MCF 10A (cell line): ENCODE measurements at regions of chr9 and their contacts with region 1.

Region 1: DNA sequence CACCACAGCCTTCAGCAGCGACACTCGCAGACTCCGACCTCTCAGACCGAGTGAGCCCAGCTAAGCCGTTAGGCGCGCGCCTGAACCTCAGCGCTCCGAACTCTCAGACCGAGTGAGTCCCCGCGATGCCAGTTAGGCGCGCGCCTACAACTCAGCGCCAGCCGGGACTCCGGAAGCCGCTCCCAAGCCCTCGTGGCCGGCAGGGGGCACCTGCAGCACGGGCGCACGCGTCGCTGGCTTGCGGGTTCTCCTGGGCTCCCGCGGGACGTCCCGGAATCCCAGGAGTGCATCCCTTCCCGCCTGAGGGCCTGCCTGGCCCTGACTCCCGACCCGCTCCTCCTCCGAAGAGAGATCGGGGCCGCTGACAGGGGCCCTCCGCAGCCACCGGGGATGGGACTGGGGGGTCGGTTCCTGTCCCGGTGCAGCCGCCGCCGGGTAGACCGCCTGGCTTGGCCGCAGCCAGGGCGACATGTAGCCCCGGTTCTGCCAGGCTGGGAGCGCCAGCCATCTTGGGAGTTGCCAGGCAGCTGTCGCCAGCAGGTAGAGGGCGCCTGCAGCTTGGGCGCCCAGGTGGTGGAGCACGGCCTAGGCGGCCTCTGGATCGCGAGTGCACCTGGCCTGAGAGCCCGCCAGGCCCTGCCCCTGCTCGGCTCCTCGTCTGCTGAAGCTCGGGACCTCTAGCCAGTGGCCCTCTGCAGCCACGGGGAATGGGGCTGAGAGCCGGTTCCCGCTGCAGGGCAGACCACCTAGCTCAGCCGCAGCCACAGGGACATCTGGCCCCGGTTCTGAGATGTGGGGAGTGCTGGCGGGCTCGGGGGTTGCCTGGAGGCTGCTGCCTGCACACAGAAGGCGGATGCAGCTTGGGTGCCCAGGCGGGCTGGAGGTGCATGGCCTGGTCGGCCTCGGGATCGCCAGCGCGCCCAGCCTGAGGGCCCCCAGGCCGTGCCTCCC is at the start of gene ANKRD18A:
- DNase-seq: peak; percentile 96
- H3K4me3 Mint-ChIP-seq: peak within 1 kb of the TSS; percentile 92
- H3K27ac Mint-ChIP-seq: peak within 1 kb of the TSS; percentile 87
- H3K4me1 Mint-ChIP-seq: no peaks in the 10 kb centered on the region
- H3K27me3 Mint-ChIP-seq: no peaks in the 10 kb centered on the region
- CTCF ChIP-seq: peak; percentile 84
- total RNA-seq, gene ANKRD18A: 42.0 and 46.0 TPM in 2 replicates

Region 2: GRCh38 chr9:38521762-38522161 is 99.0 kb before region 1 on chr9:
- CTCF ChIA-PET with region 1: no interaction called
- POLR2A ChIA-PET with region 1: interaction called, 17 read pairs
- intact Hi-C with region 1: no loop called
- DNase-seq: no peak
- H3K4me3 Mint-ChIP-seq: no peak overlapping the region
- H3K27ac Mint-ChIP-seq: no peak overlapping the region
- H3K4me1 Mint-ChIP-seq: no peaks in the 10 kb centered on the region
- H3K27me3 Mint-ChIP-seq: no peaks in the 10 kb centered on the region
- CTCF ChIP-seq: no peak

Region 3: GRCh38 chr9:38641985-38642864 is 21.5 kb after region 1 on chr9:
- CTCF ChIA-PET with region 1: interaction called, 10 read pairs
- POLR2A ChIA-PET with region 1: interaction called, 5 read pairs
- intact Hi-C with region 1: no loop called
- DNase-seq: peak; percentile 76
- H3K4me3 Mint-ChIP-seq: no peak overlapping the region
- H3K27ac Mint-ChIP-seq: no peak overlapping the region
- H3K4me1 Mint-ChIP-seq: peaks cover 6% of the 10 kb centered on the region
- H3K27me3 Mint-ChIP-seq: no peaks in the 10 kb centered on the region
- CTCF ChIP-seq: peak; percentile 70